Activated CD4-positive, alpha-beta memory T cell treated with anti-CD3 and anti-CD28 coated beads, Interleukin-2, amount 10 ng/mL, durations not matched to agents 7 days and 5 days (primary cell): ENCODE measurements at regions of chr20 and their contacts with region 1.

Region 1: DNA sequence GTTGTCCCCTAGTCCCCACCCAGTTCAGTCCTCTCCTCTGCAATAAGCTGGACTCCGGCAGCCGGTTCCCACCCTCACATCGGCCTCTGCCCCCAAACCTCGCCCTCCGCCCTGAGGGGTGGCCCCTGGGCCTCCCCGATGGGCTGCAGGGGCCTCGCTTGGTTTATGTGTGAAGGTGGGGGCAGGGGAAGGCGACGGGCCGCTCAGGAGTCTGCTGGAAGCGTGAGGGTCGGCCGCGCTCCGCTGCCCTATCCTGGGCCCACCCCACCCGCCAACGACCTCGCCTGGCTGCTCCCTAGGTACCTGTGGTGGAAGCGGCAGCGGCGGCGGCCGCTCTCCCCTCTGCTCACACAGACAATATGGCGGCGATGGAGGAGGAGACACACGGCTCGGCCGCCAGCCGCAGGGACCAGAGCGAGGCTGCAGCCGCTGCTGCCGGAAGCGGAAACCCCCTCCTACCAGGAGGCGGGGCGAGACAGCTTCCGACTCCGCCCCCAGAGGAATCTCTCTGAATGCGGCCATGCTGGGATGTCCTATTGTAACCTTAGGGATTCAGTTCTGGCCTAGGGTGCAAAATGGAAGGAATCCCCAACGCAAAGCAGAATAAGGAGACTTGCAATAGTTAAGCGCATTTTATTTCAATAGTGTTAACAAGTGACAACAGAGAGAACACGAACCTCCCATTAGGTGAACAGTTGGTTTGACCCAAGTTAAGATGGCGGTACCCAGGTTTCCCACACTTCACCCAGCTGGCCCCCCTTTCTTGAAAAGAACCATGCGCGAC is at the start of gene CSNK2A1:
- DNase-seq: peak; percentile 96
- H3K4me3 Mint-ChIP-seq: peak within 1 kb of the TSS; percentile 84
- H3K27ac Mint-ChIP-seq: peak within 1 kb of the TSS; percentile 91
- H3K4me1 Mint-ChIP-seq: peaks cover 45% of the 10 kb centered on the region
- H3K27me3 Mint-ChIP-seq: peaks cover 5% of the 10 kb centered on the region
- total RNA-seq, gene CSNK2A1: 101 to 111 TPM

Region 2: DNA sequence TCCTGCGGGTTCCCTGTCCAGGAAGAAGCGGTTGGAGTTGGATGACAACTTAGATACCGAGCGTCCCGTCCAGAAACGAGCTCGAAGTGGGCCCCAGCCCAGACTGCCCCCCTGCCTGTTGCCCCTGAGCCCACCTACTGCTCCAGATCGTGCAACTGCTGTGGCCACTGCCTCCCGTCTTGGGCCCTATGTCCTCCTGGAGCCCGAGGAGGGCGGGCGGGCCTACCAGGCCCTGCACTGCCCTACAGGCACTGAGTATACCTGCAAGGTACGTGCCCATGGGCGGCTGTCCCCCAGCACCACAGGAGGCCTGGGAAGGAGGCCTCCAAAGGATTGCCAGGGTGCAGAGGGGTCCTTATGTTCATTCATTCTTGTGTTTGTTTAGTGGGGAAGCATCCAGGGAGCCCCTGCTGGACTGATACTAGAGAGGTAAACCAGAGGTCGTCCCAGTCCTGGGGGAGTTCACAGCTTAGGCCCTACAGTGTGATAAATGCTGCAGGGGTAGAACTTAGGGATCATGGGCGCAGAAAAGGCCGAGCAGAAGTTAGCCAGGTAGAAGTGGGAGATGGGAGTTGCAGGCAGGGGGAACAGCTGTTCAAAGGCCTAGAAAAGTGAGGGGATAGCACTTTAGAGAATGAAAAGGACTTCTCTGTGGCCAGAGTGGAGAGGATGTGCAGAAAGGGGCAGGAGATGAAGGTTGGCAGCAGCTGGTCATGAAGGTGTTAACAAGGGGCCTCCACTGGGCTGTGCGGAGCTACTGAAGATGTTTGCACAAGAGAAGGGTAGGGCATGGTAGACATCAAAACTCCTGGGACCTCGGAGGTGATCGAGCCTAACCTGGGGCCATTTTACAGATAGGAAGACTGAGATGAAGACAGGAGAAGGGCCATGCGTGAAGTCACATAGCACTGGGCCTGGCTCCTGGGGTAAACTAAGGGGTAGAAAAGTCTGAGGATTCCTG is 155.2 kb before region 1 on chr20:
- CTCF ChIA-PET with region 1: no interaction called
- POLR2A ChIA-PET with region 1: no interaction called
- DNase-seq: no peak
- H3K4me3 Mint-ChIP-seq: no peak overlapping the region
- H3K27ac Mint-ChIP-seq: no peak overlapping the region
- H3K4me1 Mint-ChIP-seq: peaks cover 10% of the 10 kb centered on the region
- H3K27me3 Mint-ChIP-seq: no peaks in the 10 kb centered on the region

Region 3: GRCh38 chr20:517221-517620 is 26.3 kb before region 1 on chr20:
- CTCF ChIA-PET with region 1: no interaction called
- POLR2A ChIA-PET with region 1: no interaction called
- DNase-seq: no peak
- H3K4me3 Mint-ChIP-seq: no peak overlapping the region
- H3K27ac Mint-ChIP-seq: no peak overlapping the region
- H3K4me1 Mint-ChIP-seq: peaks cover 3% of the 10 kb centered on the region
- H3K27me3 Mint-ChIP-seq: no peaks in the 10 kb centered on the region

Region 4: DNA sequence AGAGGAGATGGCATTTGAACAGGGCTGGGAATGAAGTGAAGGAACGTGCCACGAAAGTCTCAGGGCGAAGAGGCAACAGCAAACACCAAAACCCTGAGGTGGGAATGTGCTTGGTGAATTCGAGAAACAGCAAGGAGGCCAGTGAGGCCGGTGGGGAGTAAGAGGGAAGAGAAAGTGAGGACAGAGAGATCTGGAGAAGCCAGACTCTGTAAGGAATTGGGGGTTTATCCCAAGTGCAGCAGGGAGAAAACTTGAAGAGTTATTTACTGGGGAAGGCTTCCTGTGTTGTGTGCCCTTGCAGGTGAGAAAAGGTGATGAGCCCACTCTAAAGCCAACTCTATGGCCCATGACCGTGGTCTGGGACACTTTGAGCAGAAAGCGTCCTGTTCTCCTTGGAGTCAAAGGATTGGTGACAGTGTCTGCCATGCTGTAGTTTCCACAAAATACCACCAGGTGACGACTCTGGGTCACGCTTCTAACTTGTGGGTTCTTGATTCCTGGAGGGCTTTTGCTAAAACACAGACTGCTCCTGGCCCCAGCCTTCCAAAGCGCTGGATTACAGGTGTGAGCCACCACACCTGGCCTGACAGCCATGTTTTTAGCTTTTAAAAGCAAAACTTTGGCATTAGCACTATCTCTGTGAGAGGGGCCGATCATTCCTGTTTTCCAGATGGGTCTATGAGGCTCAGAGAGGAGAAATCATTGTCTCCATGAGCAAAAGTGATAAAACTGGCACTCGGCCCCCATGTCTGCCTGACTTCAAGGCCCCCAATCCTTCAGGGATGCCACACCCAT is 18.1 kb after region 1 on chr20:
- CTCF ChIA-PET with region 1: interaction called, 3 read pairs
- POLR2A ChIA-PET with region 1: interaction called, 11 read pairs
- DNase-seq: peak; percentile 59
- H3K4me3 Mint-ChIP-seq: no peak overlapping the region
- H3K27ac Mint-ChIP-seq: no peak overlapping the region
- H3K4me1 Mint-ChIP-seq: no peaks in the 10 kb centered on the region
- H3K27me3 Mint-ChIP-seq: peaks cover 12% of the 10 kb centered on the region

Region 5: GRCh38 chr20:571754-572441 is 28.3 kb after region 1 on chr20:
- CTCF ChIA-PET with region 1: no interaction called
- POLR2A ChIA-PET with region 1: no interaction called
- DNase-seq: no peak
- H3K4me3 Mint-ChIP-seq: no peak overlapping the region
- H3K27ac Mint-ChIP-seq: no peak overlapping the region
- H3K4me1 Mint-ChIP-seq: no peaks in the 10 kb centered on the region
- H3K27me3 Mint-ChIP-seq: peaks cover 36% of the 10 kb centered on the region

Region 6: GRCh38 chr20:750801-751200 is 207.2 kb after region 1 on chr20:
- CTCF ChIA-PET with region 1: no interaction called
- POLR2A ChIA-PET with region 1: no interaction called
- DNase-seq: no peak
- H3K4me3 Mint-ChIP-seq: no peak overlapping the region
- H3K27ac Mint-ChIP-seq: no peak overlapping the region
- H3K4me1 Mint-ChIP-seq: peaks cover 2% of the 10 kb centered on the region
- H3K27me3 Mint-ChIP-seq: peaks cover 4% of the 10 kb centered on the region